ENCODE measurements at regions of chr16 and their contacts with region 1.

Region 1: DNA sequence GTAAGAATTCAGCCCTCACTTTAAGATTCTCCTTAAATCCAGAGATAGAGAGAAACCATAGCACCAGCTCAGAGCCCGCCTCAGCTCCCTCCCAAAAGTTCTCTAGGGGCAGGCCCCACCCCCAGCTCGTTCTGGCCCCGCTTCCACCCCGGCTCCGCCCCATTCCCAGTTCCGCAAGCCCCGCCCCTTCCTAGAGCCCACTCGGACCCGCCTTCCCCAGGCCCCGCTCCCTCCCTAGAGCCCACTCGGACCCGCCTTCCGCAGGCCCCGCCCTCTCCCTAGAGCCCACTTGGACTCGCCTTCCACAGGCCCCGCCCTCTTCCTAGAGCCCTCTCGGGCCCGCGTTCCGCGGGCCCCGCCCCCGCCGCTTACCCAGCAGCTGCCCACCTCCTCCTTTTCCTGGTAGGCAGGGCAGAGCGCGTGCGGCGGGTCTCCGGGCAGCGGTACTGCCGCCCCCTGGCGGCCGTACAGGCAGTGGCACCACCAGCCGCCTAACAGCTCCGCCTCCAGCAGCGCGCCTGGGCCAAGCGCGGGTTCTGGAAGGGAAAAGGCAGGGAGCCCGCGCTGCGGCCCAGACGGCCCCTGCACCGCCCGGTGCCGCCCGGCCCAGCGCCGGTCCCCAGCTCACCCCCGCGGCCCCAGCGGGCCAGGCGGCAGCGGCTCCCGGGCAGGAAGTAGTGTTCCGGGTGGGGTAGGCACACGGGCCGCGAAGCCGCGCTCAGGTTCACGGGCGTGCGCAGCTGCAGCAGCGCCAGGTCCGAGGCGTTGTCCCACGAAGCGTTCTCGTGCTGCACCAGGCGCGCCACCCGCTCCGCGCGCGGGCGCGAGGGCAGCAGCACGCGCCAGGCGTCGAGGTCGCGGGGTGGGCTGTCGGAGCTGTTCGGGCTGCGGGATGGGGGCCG is 6.8 kb upstream of the PRSS8 start:
- DNase-seq: peak; percentile 99
- H3K4me3 Mint-ChIP-seq: peak overlapping the region; percentile 71
- H3K27ac Mint-ChIP-seq: peak overlapping the region; percentile 91
- H3K4me1 Mint-ChIP-seq: peaks cover 21% of the 10 kb centered on the region
- H3K27me3 Mint-ChIP-seq: no peaks in the 10 kb centered on the region
- CTCF ChIP-seq: peak; percentile 90

Region 2: GRCh38 chr16:30429678-30430427 is 712.5 kb before region 1 on chr16 and contains the start of gene DCTPP1:
- CTCF ChIA-PET with region 1: no interaction called
- POLR2A ChIA-PET with region 1: no interaction called
- intact Hi-C with region 1: no loop called
- DNase-seq: peak; percentile 100
- H3K4me3 Mint-ChIP-seq: no peak within 1 kb of the TSS
- H3K27ac Mint-ChIP-seq: no peak within 1 kb of the TSS
- H3K4me1 Mint-ChIP-seq: peaks cover 15% of the 10 kb centered on the region
- H3K27me3 Mint-ChIP-seq: no peaks in the 10 kb centered on the region
- CTCF ChIP-seq: peak; percentile 71
- total RNA-seq, gene DCTPP1: 29.1 and 42.4 TPM in 2 replicates

Region 3: GRCh38 chr16:31094424-31095120 is 47.8 kb before region 1 on chr16 and contains the start of gene VKORC1:
- CTCF ChIA-PET with region 1: interaction called, 5 read pairs
- POLR2A ChIA-PET with region 1: interaction called, 11 read pairs
- intact Hi-C with region 1: no loop called
- DNase-seq: peak; percentile 99
- H3K4me3 Mint-ChIP-seq: peak within 1 kb of the TSS; percentile 85
- H3K27ac Mint-ChIP-seq: peak within 1 kb of the TSS; percentile 77
- H3K4me1 Mint-ChIP-seq: peaks cover 12% of the 10 kb centered on the region
- H3K27me3 Mint-ChIP-seq: no peaks in the 10 kb centered on the region
- CTCF ChIP-seq: no peak
- total RNA-seq, gene VKORC1: 64.7 and 66.3 TPM in 2 replicates

Region 4: DNA sequence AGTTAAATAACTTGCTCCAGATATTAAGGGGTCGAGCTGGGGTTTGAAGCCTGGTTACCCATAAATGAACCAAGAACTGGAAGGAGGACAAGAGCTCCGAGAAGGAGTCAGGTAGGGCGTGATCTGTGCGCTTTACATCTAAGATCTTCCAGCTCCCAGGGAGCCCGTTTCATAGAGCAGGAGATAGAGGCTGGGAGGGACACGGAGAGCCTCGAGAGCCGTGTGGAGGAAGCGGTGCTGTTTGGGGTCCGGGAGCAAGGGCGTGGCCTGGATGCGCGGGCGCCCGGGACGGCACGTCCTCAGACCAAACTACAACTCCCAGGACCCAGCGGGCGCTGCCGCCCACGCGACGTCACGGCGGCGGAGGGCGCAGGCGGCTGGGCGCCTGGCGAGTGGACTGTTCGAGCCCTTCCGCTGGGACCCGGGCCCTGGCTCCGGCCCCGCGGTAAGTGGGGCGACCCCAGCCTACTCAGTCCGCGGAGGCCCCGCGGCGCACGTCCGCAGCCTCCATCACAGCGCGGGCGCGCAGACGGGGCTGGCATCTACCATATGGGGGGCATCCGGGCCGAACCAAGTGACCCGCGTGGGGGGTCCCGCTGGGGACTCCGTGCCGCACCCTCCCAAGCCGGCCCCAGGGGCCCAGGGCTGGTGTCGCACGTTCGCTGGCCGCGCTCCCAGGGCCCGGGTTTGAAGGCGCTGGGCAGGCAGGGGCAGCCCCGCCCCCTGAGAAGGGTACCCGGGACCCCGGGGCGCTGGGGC is 34.1 kb before region 1 on chr16 and contains the start of gene BCKDK:
- CTCF ChIA-PET with region 1: interaction called, 5 read pairs
- POLR2A ChIA-PET with region 1: interaction called, 4 read pairs
- intact Hi-C with region 1: loop called (anchors 2 kb)
- DNase-seq: peak; percentile 60
- H3K4me3 Mint-ChIP-seq: peak within 1 kb of the TSS; percentile 73
- H3K27ac Mint-ChIP-seq: no peak within 1 kb of the TSS
- H3K4me1 Mint-ChIP-seq: peaks cover 20% of the 10 kb centered on the region
- H3K27me3 Mint-ChIP-seq: no peaks in the 10 kb centered on the region
- CTCF ChIP-seq: no peak
- total RNA-seq, gene BCKDK: 31.7 and 41.0 TPM in 2 replicates